ENCODE measurements at regions of chr3 and their contacts with region 1.

Region 1: GRCh38 chr3:147945968-147946519 is 536.9 kb downstream of the ZIC1 start:
- DNase-seq: peak; percentile 75
- H3K4me3 Mint-ChIP-seq: peak overlapping the region; percentile 9
- H3K27ac Mint-ChIP-seq: peak overlapping the region; percentile 36
- H3K4me1 Mint-ChIP-seq: peaks cover 35% of the 10 kb centered on the region
- H3K27me3 Mint-ChIP-seq: no peaks in the 10 kb centered on the region
- CTCF ChIP-seq: peak; percentile 80

Region 2: GRCh38 chr3:147119989-147120388 is 826.1 kb before region 1 on chr3:
- CTCF ChIA-PET with region 1: no interaction called
- intact Hi-C with region 1: loop called (anchors 5 kb)
- DNase-seq: no peak
- H3K4me3 Mint-ChIP-seq: no peak overlapping the region
- H3K27ac Mint-ChIP-seq: no peak overlapping the region
- H3K4me1 Mint-ChIP-seq: no peaks in the 10 kb centered on the region
- H3K27me3 Mint-ChIP-seq: no peaks in the 10 kb centered on the region
- CTCF ChIP-seq: peak; percentile 47

Region 3: DNA sequence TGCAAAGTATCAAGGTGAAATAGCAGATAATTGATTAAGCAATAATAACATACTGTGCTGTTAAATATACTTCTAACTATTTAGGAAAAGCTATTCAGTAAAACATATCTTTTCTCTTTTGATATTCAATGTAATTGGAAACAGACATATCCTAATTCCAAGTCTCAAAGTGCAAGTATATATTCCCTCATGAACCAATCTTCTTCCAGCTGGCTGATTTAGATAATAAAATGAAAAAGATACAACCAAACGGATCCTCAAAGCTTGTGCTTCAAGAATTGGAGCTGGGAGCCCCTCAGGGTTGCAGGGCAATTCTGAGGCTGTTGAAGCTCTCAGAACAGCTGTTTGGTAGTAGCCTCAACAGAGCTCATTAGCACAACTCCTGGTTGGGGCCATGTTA is 300.3 kb before region 1 on chr3:
- CTCF ChIA-PET with region 1: interaction called, 10 read pairs
- intact Hi-C with region 1: no loop called
- DNase-seq: no peak
- H3K4me3 Mint-ChIP-seq: no peak overlapping the region
- H3K27ac Mint-ChIP-seq: no peak overlapping the region
- H3K4me1 Mint-ChIP-seq: no peaks in the 10 kb centered on the region
- H3K27me3 Mint-ChIP-seq: no peaks in the 10 kb centered on the region
- CTCF ChIP-seq: no peak

Region 4: GRCh38 chr3:147713234-147714133 is 232.6 kb before region 1 on chr3:
- CTCF ChIA-PET with region 1: no interaction called
- intact Hi-C with region 1: loop called (anchors 5 kb)
- DNase-seq: no peak
- H3K4me3 Mint-ChIP-seq: no peak overlapping the region
- H3K27ac Mint-ChIP-seq: no peak overlapping the region
- H3K4me1 Mint-ChIP-seq: peaks cover 36% of the 10 kb centered on the region
- H3K27me3 Mint-ChIP-seq: no peaks in the 10 kb centered on the region
- CTCF ChIP-seq: no peak

Region 5: GRCh38 chr3:147816770-147817169 is 129.3 kb before region 1 on chr3:
- CTCF ChIA-PET with region 1: no interaction called
- intact Hi-C with region 1: loop called (anchors 5 kb)
- DNase-seq: peak; percentile 88
- H3K4me3 Mint-ChIP-seq: peak overlapping the region; percentile 25
- H3K27ac Mint-ChIP-seq: peak overlapping the region; percentile 84
- H3K4me1 Mint-ChIP-seq: peaks cover 14% of the 10 kb centered on the region
- H3K27me3 Mint-ChIP-seq: no peaks in the 10 kb centered on the region
- CTCF ChIP-seq: no peak

Region 6: GRCh38 chr3:147930232-147930807 is 15.7 kb before region 1 on chr3:
- CTCF ChIA-PET with region 1: interaction called, 10 read pairs
- intact Hi-C with region 1: no loop called
- DNase-seq: peak; percentile 29
- H3K4me3 Mint-ChIP-seq: peak overlapping the region; percentile 62
- H3K27ac Mint-ChIP-seq: peak overlapping the region; percentile 95
- H3K4me1 Mint-ChIP-seq: peaks cover 12% of the 10 kb centered on the region
- H3K27me3 Mint-ChIP-seq: no peaks in the 10 kb centered on the region
- CTCF ChIP-seq: no peak

Region 7: GRCh38 chr3:148178503-148178902 is 232.5 kb after region 1 on chr3:
- CTCF ChIA-PET with region 1: no interaction called
- intact Hi-C with region 1: no loop called
- DNase-seq: peak; percentile 45
- H3K4me3 Mint-ChIP-seq: no peak overlapping the region
- H3K27ac Mint-ChIP-seq: peak overlapping the region; percentile 66
- H3K4me1 Mint-ChIP-seq: peaks cover 14% of the 10 kb centered on the region
- H3K27me3 Mint-ChIP-seq: no peaks in the 10 kb centered on the region
- CTCF ChIP-seq: no peak

Measured in Calu3 (cell line).